PC-3 (cell line): ENCODE measurements at regions of chr1 and their contacts with region 1.

Region 1: GRCh38 chr1:37455516-37455915 is 18.9 kb upstream of the ZC3H12A start:
- DNase-seq: no peak
- ATAC-seq: no peak
- H3K4me3 ChIP-seq: no peak overlapping the region
- H3K27ac ChIP-seq: no peak overlapping the region
- H3K4me1 ChIP-seq: peaks cover 8% of the 10 kb centered on the region; the same call in 1 of the 2 replicates
- H3K27me3 ChIP-seq: no peaks in the 10 kb centered on the region
- CTCF ChIP-seq: no peak

Region 2: GRCh38 chr1:37056325-37056724 is 399.2 kb before region 1 on chr1:
- CTCF ChIA-PET with region 1: no interaction called
- POLR2A ChIA-PET with region 1: no interaction called
- intact Hi-C with region 1: no loop called
- DNase-seq: no peak
- ATAC-seq: no peak
- H3K4me3 ChIP-seq: no peak overlapping the region
- H3K27ac ChIP-seq: no peak overlapping the region
- H3K4me1 ChIP-seq: no peaks in the 10 kb centered on the region
- H3K27me3 ChIP-seq: peaks cover 11% of the 10 kb centered on the region
- CTCF ChIP-seq: no peak

Region 3: GRCh38 chr1:37486680-37487618 is 31.4 kb after region 1 on chr1:
- CTCF ChIA-PET with region 1: interaction called, 12 read pairs
- POLR2A ChIA-PET with region 1: no interaction called
- intact Hi-C with region 1: loop called (anchors 1 kb)
- DNase-seq: peak; percentile 69
- ATAC-seq: peak; percentile 63
- H3K4me3 ChIP-seq: no peak overlapping the region
- H3K27ac ChIP-seq: no peak overlapping the region; the same call in none of the 2 replicates
- H3K4me1 ChIP-seq: peaks cover 23% of the 10 kb centered on the region
- H3K27me3 ChIP-seq: no peaks in the 10 kb centered on the region
- CTCF ChIP-seq: peak; percentile 98